K562 (cell line): ENCODE measurements at regions of chr9 and their contacts with region 1.

Region 1: GRCh38 chr9:34403554-34404380 is 27.1 kb upstream of the MYORG start:
- DNase-seq: peak; percentile 53 to 73 (median 72)
- ATAC-seq: peak; percentile 72
- H3K4me3 ChIP-seq: no peak overlapping the region
- H3K27ac ChIP-seq: no peak overlapping the region
- H3K4me1 ChIP-seq: no peaks in the 10 kb centered on the region; a peak in 1 of 5 replicates
- H3K27me3 ChIP-seq: no peaks in the 10 kb centered on the region
- CTCF ChIP-seq: peak; percentile 91 to 96 (median 93)
- EP300 ChIP-seq: no peak
- POLR2A ChIP-seq: no peak
- RAD21 ChIP-seq: peak; percentile 55 to 70

Region 2: DNA sequence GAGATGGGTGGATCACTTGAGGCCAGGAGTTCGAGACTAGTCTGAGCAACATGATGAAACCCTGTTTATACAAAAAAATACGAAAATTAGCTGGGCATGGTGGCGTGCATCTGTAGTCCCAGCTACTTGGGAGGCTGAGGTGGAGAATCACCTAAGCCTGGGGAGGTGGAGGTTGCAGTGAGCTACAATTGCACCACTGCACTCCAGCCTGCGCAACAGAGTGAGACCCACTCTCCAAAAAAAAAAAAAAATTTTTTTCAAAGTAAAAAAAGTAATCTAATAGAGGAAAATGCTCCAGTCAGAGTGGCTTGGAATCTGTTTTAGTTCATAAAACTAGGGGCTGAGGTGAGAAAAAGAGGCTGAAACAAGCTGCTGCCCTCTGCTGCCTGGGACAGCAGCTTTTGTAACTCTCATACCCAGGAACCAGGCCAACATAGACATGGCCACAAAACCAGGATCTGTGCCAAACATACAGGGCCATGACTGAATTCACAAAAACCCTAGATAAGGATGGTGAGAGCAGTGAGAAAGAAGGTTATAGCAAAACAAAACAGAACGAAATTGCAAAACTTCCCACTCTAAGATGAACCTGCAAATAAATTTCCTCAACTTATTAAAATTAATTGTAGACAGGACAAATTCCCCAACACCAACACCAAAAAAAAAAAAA is 264.2 kb before region 1 on chr9:
- CTCF ChIA-PET with region 1: no interaction called
- POLR2A ChIA-PET with region 1: no interaction called
- in situ Hi-C with region 1: no loop called
- intact Hi-C with region 1: no loop called
- DNase-seq: peak; percentile 17 to 62 (median 44)
- ATAC-seq: peak; percentile 84
- H3K4me3 ChIP-seq: no peak overlapping the region
- H3K27ac ChIP-seq: no peak overlapping the region
- H3K4me1 ChIP-seq: peaks cover 3 to 16% of the 10 kb centered on the region in 2 experiments; a peak in 4 of 5 replicates
- H3K27me3 ChIP-seq: no peaks in the 10 kb centered on the region
- CTCF ChIP-seq: peak in 2 of 3 experiments; percentile 27 to 47; a peak in 3 of 6 replicates
- EP300 ChIP-seq: no peak
- POLR2A ChIP-seq: no peak
- RAD21 ChIP-seq: peak; percentile 30 to 31; a peak in 2 of 4 replicates

Region 3: GRCh38 chr9:34363619-34364351 is 40.0 kb before region 1 on chr9:
- CTCF ChIA-PET with region 1: no interaction called
- POLR2A ChIA-PET with region 1: no interaction called
- in situ Hi-C with region 1: no loop called
- intact Hi-C with region 1: no loop called
- DNase-seq: no peak
- ATAC-seq: no peak
- H3K4me3 ChIP-seq: no peak overlapping the region
- H3K27ac ChIP-seq: no peak overlapping the region
- H3K4me1 ChIP-seq: no peaks in the 10 kb centered on the region
- H3K27me3 ChIP-seq: peaks cover 0 to 7% of the 10 kb centered on the region in 2 experiments; a peak in 1 of 5 replicates
- CTCF ChIP-seq: no peak
- EP300 ChIP-seq: no peak
- POLR2A ChIP-seq: no peak
- RAD21 ChIP-seq: no peak

Region 4: DNA sequence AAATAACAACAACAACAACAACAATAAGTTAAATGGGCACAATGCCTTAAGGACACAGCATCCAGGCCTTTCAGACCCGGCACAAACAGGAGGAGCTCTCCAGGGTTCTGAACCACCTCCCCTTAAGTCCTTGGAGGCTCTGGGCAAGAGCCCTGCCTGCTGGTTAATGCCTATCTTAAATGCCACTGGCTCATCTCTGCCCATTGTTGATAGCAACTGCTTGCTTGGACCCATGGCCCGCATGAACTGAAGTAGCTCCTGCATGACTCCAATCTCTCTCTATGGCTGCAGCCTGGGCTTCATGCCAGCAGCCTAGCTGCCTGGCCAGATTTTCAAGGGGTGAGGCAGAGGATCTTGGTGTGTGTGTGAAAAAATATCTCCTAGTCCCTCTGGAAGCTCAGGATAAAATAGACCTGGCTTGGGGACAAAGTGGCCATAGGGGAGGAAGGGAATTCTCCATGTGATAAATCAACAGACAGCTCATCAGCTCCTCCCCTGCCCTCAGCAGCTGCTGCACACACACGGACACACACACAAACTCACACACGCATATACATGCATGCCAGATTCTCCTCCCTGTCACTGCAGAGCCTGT is 27.2 kb after region 1 on chr9:
- CTCF ChIA-PET with region 1: no interaction called
- POLR2A ChIA-PET with region 1: no interaction called
- in situ Hi-C with region 1: no loop called
- intact Hi-C with region 1: no loop called
- DNase-seq: peak; percentile 29 to 44 (median 32)
- ATAC-seq: peak; percentile 60; the same call in 1 of the 3 replicates
- H3K4me3 ChIP-seq: no peak overlapping the region
- H3K27ac ChIP-seq: no peak overlapping the region
- H3K4me1 ChIP-seq: peaks cover 0 to 2% of the 10 kb centered on the region in 2 experiments; a peak in 3 of 5 replicates
- H3K27me3 ChIP-seq: no peaks in the 10 kb centered on the region
- CTCF ChIP-seq: no peak
- EP300 ChIP-seq: no peak
- POLR2A ChIP-seq: no peak
- RAD21 ChIP-seq: no peak

Region 5: DNA sequence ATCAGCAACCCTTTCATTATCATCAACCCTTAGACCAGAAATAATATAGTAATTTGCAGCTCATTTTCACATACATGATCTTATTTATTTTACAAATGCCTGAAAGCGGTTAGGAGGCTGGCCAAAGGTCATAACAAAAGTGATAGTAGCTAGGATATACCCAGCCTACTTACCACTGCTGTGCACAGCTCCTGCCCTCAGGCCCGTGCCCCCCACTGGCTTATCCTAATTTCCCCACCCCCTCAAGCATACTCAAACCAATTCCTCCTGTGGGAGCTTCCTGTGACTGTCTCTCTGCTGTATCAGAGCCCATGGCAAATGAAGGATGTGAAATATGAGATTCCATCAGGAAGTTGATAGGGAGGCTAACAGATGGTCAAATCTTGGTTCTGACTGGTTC is 39.8 kb after region 1 on chr9:
- CTCF ChIA-PET with region 1: no interaction called
- POLR2A ChIA-PET with region 1: no interaction called
- in situ Hi-C with region 1: no loop called
- intact Hi-C with region 1: no loop called
- DNase-seq: no peak
- ATAC-seq: no peak
- H3K4me3 ChIP-seq: no peak overlapping the region
- H3K27ac ChIP-seq: no peak overlapping the region
- H3K4me1 ChIP-seq: no peaks in the 10 kb centered on the region
- H3K27me3 ChIP-seq: no peaks in the 10 kb centered on the region
- CTCF ChIP-seq: no peak
- EP300 ChIP-seq: no peak
- POLR2A ChIP-seq: no peak
- RAD21 ChIP-seq: no peak

Region 6: GRCh38 chr9:34500623-34501267 is 97.0 kb after region 1 on chr9:
- CTCF ChIA-PET with region 1: interaction called, 14 read pairs
- POLR2A ChIA-PET with region 1: no interaction called
- in situ Hi-C with region 1: no loop called
- intact Hi-C with region 1: loop called (anchors 1 kb)
- DNase-seq: peak; percentile 60 to 75 (median 68)
- ATAC-seq: peak; percentile 79
- H3K4me3 ChIP-seq: no peak overlapping the region
- H3K27ac ChIP-seq: no peak overlapping the region
- H3K4me1 ChIP-seq: no peaks in the 10 kb centered on the region
- H3K27me3 ChIP-seq: no peaks in the 10 kb centered on the region; a peak in 1 of 5 replicates
- CTCF ChIP-seq: peak; percentile 85 to 88 (median 85)
- EP300 ChIP-seq: no peak
- POLR2A ChIP-seq: no peak
- RAD21 ChIP-seq: peak; percentile 70 to 85

Region 7: GRCh38 chr9:34591248-34591916 is 187.6 kb after region 1 on chr9:
- CTCF ChIA-PET with region 1: no interaction called
- POLR2A ChIA-PET with region 1: interaction called, 3 read pairs
- in situ Hi-C with region 1: no loop called
- intact Hi-C with region 1: loop called (anchors 5 kb)
- DNase-seq: peak; percentile 79 to 84 (median 81)
- ATAC-seq: peak; percentile 99
- H3K4me3 ChIP-seq: no peak overlapping the region
- H3K27ac ChIP-seq: no peak overlapping the region
- H3K4me1 ChIP-seq: peaks cover 0 to 34% of the 10 kb centered on the region in 2 experiments; a peak in 2 of 5 replicates
- H3K27me3 ChIP-seq: peaks cover 10 to 47% of the 10 kb centered on the region in 2 experiments
- CTCF ChIP-seq: peak; percentile 67 to 93 (median 85)
- EP300 ChIP-seq: no peak
- POLR2A ChIP-seq: no peak
- RAD21 ChIP-seq: peak; percentile 63 to 90

Region 8: GRCh38 chr9:34603610-34604231 is 200.0 kb after region 1 on chr9:
- CTCF ChIA-PET with region 1: no interaction called
- POLR2A ChIA-PET with region 1: interaction called, 3 read pairs
- in situ Hi-C with region 1: loop called (anchors 10 kb)
- intact Hi-C with region 1: no loop called
- DNase-seq: peak; percentile 75 to 81 (median 78)
- ATAC-seq: peak; percentile 93
- H3K4me3 ChIP-seq: no peak overlapping the region
- H3K27ac ChIP-seq: no peak overlapping the region
- H3K4me1 ChIP-seq: peaks cover 0 to 7% of the 10 kb centered on the region in 2 experiments; a peak in 2 of 5 replicates
- H3K27me3 ChIP-seq: no peaks in the 10 kb centered on the region
- CTCF ChIP-seq: peak; percentile 75 to 86 (median 84)
- EP300 ChIP-seq: no peak
- POLR2A ChIP-seq: no peak
- RAD21 ChIP-seq: peak; percentile 71 to 87